ENCODE measurements at regions of chr16 and their contacts with region 1.

Region 1: DNA sequence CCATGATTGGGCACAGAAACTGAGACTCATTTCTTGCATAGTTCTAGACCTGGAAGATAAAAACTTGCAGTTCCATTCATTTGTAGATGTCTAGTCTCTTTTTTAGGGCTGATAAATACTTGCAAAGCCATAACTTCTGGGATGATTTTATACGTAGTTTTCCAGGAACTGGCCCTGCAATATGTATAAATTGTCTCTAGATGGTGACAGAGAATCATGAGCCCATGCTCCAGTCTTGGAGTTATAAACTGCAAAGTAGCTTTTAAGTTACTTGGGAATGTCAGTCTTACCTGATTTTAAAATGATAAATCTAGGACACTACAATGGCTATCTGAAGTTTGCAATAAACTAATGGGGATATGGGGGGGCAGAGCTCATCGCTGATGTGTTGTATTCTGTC is 3.0 kb upstream of the ADAMTS18 start:
- DNase-seq: no peak
- ATAC-seq: no peak
- H3K4me3 ChIP-seq: no peak overlapping the region
- H3K27ac ChIP-seq: no peak overlapping the region
- H3K4me1 ChIP-seq: no peaks in the 10 kb centered on the region
- H3K27me3 ChIP-seq: peaks cover 29% of the 10 kb centered on the region
- CTCF ChIP-seq: peak in 2 of 3 experiments; percentile 7 to 39; a peak in 2 of 6 replicates
- POLR2A ChIP-seq: no peak
- RAD21 ChIP-seq: peak; percentile 41; the same call in 1 of the 2 replicates

Region 2: GRCh38 chr16:77457046-77457445 is 19.2 kb after region 1 on chr16:
- CTCF ChIA-PET with region 1: no interaction called
- POLR2A ChIA-PET with region 1: no interaction called
- RAD21 ChIA-PET with region 1: no interaction called
- intact Hi-C with region 1: loop called (anchors 1 kb)
- DNase-seq: no peak
- ATAC-seq: no peak
- H3K4me3 ChIP-seq: no peak overlapping the region
- H3K27ac ChIP-seq: no peak overlapping the region
- H3K4me1 ChIP-seq: no peaks in the 10 kb centered on the region
- H3K27me3 ChIP-seq: peaks cover 13% of the 10 kb centered on the region
- CTCF ChIP-seq: no peak
- POLR2A ChIP-seq: no peak
- RAD21 ChIP-seq: no peak

Region 3: GRCh38 chr16:77736879-77737278 is 299.0 kb after region 1 on chr16:
- CTCF ChIA-PET with region 1: no interaction called
- POLR2A ChIA-PET with region 1: no interaction called
- RAD21 ChIA-PET with region 1: no interaction called
- intact Hi-C with region 1: no loop called
- DNase-seq: no peak
- ATAC-seq: no peak
- H3K4me3 ChIP-seq: no peak overlapping the region
- H3K27ac ChIP-seq: no peak overlapping the region
- H3K4me1 ChIP-seq: no peaks in the 10 kb centered on the region
- H3K27me3 ChIP-seq: no peaks in the 10 kb centered on the region
- CTCF ChIP-seq: no peak
- POLR2A ChIP-seq: no peak
- RAD21 ChIP-seq: no peak